ENCODE measurements at regions of chr13 and their contacts with region 1.

Region 1: DNA sequence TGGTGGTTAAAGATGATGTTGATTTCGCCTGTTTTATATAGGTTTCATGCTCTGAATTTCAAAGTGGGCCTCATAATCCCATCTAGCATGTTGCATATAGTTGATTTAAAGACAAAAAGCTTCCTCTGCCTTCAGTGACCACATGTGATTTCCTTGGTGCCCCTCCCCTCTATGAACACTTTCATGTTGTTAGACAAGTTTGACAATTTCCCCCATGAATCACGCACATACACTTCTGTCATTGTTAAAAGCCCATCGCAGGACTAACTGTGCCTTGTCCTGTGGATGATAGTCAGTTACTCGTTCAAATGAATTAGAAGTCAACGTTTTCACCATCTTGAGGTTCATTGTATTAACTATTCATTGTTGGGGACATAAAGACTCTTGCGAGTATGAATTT is 6.7 kb downstream of the TNFSF11 start:
- DNase-seq: no peak
- H3K4me3 ChIP-seq: no peak overlapping the region
- H3K27ac ChIP-seq: no peak overlapping the region
- H3K4me1 ChIP-seq: no peaks in the 10 kb centered on the region
- H3K27me3 ChIP-seq: peaks cover 9% of the 10 kb centered on the region
- CTCF ChIP-seq: no peak
- EP300 ChIP-seq: no peak
- RAD21 ChIP-seq: no peak

Region 2: DNA sequence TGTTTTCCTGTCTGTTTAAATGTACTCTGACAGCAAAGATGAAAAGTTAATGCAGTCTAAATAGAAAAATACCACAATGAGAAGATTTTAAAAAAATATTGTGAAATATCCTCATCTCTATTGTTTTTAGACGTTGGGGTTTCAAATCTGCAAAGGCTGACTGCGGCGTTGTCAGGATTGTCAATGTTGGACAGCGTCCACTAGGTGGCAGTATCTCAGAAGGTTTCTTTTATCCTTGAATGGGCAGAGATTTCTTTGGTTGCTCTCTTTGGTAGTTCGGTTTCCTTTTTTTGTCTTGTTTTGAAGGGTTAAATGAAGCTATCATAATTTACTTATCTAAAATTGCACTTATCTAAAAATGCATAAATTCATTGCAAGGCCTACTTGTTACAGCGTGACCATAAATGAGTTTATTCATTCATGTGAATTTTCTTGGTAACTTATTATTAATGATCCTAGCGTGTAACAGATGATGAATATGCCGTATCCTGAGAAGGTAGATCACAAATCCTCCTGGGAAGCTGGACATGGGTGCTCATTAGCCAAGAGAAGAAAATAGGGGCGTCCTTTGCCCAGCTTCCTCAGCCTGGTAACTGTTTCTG is 14.4 kb after region 1 on chr13:
- CTCF ChIA-PET with region 1: interaction called, 10 read pairs
- POLR2A ChIA-PET with region 1: no interaction called
- DNase-seq: peak; percentile 58
- H3K4me3 ChIP-seq: peak overlapping the region in 1 of 2 experiments; percentile 30; a peak in 1 of 4 replicates
- H3K27ac ChIP-seq: no peak overlapping the region
- H3K4me1 ChIP-seq: no peaks in the 10 kb centered on the region
- H3K27me3 ChIP-seq: peaks cover 11% of the 10 kb centered on the region; the same call in 1 of the 2 replicates
- CTCF ChIP-seq: peak; percentile 92
- EP300 ChIP-seq: no peak
- RAD21 ChIP-seq: peak; percentile 84